CD8-positive, alpha-beta memory T cell (primary cell): ENCODE measurements at regions of chr20 and their contacts with region 1.

Region 1: DNA sequence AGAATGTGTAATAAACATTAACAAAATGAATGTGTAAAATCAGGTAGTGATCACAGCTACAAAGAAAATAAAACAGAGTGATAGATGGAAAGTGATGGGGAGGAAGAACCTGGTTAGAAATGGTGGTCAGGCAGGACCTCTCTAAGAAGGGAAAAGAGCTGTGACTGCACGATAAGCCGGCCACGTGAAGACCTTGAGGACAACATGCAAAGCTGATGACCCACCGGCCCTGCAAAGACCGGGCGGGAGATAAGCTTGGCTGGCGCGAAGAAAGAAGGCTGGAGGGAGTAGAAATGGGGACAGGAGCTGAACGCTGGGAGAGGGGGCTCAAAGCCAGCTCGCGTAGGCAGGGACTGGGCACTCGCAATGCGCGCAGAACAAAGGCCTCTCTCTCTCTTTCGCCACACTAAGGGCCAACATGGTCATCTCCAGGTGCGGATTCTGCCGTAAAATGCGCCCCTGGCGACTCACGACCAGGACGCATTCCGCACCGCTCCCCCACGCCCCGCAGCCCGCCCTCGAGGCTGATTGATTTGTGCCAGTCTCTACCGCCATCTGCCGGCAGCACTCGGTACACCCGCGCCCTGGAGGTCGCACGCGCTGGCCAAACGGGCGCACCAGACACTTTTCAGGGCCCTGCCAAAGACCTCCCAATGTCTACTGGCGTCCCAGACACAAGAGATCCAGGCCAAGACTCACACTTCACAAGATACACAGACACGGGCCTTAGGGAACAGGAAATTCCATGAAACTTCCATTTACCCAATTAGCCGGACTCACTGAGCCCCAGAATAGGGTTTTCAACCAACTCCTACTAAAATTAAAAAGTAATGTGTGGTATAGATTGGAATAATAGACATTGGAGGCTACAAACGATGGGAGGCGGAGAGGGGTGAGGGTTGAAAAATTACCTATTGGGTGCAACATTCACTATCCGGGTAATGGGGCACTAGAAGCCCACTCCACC is 9.4 kb downstream of the DEFB132 start:
- DNase-seq: peak; percentile 79 to 89 (median 84)
- H3K4me3 ChIP-seq: peak overlapping the region; percentile 75
- H3K4me3 Mint-ChIP-seq: peak overlapping the region; percentile 67 to 88 (median 82)
- H3K27ac ChIP-seq: no peak overlapping the region
- H3K27ac Mint-ChIP-seq: peak overlapping the region in 5 of 8 donors; percentile 19 to 57 (median 39)
- H3K4me1 ChIP-seq: peaks cover 6% of the 10 kb centered on the region
- H3K4me1 Mint-ChIP-seq: peaks cover 8 to 11% (median 10%) of the 10 kb centered on the region in 3 donors
- H3K27me3 ChIP-seq: no peaks in the 10 kb centered on the region
- H3K27me3 Mint-ChIP-seq: peaks cover 0 to 11% of the 10 kb centered on the region in 2 donors

Region 2: GRCh38 chr20:208942-209566 is 57.8 kb before region 1 on chr20:
- CTCF ChIA-PET with region 1: interaction called, 13 read pairs
- POLR2A ChIA-PET with region 1: no interaction called
- DNase-seq: peak in 2 of 5 donors; percentile 23 to 43
- H3K4me3 ChIP-seq: no peak overlapping the region
- H3K4me3 Mint-ChIP-seq: no peak overlapping the region
- H3K27ac ChIP-seq: no peak overlapping the region
- H3K27ac Mint-ChIP-seq: no peak overlapping the region
- H3K4me1 ChIP-seq: no peaks in the 10 kb centered on the region
- H3K4me1 Mint-ChIP-seq: no peaks in the 10 kb centered on the region
- H3K27me3 ChIP-seq: peaks cover 4% of the 10 kb centered on the region
- H3K27me3 Mint-ChIP-seq: peaks cover 0 to 14% of the 10 kb centered on the region in 2 donors

Region 3: DNA sequence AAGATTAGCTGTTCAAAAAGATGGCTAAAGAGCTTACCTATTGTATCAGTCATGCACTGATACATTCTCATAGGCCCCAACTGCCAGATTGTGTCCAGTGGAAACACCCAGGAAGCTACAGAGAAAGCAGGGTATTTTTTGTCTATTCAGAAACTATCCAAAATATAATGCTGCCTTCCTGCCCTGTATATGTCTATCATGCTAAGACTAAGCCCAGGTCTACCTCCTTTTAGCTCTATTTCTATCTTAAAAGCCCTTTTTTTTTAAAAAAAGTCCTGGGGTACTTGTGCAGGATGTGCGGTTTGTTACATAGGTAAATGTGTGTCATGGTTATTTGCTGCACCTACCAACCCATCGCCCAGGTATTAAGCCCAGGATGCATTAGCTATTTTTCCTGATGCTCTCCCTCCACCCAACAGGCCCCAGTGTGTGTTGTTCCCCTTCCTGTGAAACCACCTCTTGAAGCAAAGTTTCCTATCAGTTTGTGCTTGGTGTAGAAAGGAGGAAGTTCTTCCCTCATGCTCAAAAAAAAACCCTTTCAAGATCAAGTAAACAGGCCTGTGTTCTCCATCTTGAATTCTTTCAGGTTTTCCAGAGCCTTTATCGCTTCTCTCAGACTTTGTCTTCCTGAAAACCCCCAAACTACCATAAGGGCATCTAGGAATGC is 39.3 kb before region 1 on chr20:
- CTCF ChIA-PET with region 1: no interaction called
- POLR2A ChIA-PET with region 1: no interaction called
- DNase-seq: peak in 1 of 5 donors; percentile 16
- H3K4me3 ChIP-seq: no peak overlapping the region
- H3K4me3 Mint-ChIP-seq: no peak overlapping the region
- H3K27ac ChIP-seq: no peak overlapping the region
- H3K27ac Mint-ChIP-seq: no peak overlapping the region
- H3K4me1 ChIP-seq: peaks cover 21% of the 10 kb centered on the region
- H3K4me1 Mint-ChIP-seq: peaks cover 0 to 4% (median 0%) of the 10 kb centered on the region in 3 donors
- H3K27me3 ChIP-seq: no peaks in the 10 kb centered on the region
- H3K27me3 Mint-ChIP-seq: peaks cover 0 to 25% of the 10 kb centered on the region in 2 donors

Region 4: GRCh38 chr20:297098-297924 is 30.4 kb after region 1 on chr20 and contains the start of gene ZCCHC3:
- CTCF ChIA-PET with region 1: interaction called, 17 read pairs
- POLR2A ChIA-PET with region 1: interaction called, 7 read pairs
- DNase-seq: peak; percentile 73 to 89 (median 81)
- H3K4me3 ChIP-seq: peak within 1 kb of the TSS; percentile 95
- H3K4me3 Mint-ChIP-seq: peak within 1 kb of the TSS; percentile 96 to 100 (median 99)
- H3K27ac ChIP-seq: peak within 1 kb of the TSS; percentile 84
- H3K27ac Mint-ChIP-seq: peak within 1 kb of the TSS; percentile 98 to 100 (median 99)
- H3K4me1 ChIP-seq: peaks cover 26% of the 10 kb centered on the region
- H3K4me1 Mint-ChIP-seq: peaks cover 39 to 45% (median 45%) of the 10 kb centered on the region in 3 donors
- H3K27me3 ChIP-seq: no peaks in the 10 kb centered on the region
- H3K27me3 Mint-ChIP-seq: peaks cover 0 to 2% of the 10 kb centered on the region in 2 donors
- total RNA-seq, gene ZCCHC3: 25.3 to 25.4 TPM

Region 5: DNA sequence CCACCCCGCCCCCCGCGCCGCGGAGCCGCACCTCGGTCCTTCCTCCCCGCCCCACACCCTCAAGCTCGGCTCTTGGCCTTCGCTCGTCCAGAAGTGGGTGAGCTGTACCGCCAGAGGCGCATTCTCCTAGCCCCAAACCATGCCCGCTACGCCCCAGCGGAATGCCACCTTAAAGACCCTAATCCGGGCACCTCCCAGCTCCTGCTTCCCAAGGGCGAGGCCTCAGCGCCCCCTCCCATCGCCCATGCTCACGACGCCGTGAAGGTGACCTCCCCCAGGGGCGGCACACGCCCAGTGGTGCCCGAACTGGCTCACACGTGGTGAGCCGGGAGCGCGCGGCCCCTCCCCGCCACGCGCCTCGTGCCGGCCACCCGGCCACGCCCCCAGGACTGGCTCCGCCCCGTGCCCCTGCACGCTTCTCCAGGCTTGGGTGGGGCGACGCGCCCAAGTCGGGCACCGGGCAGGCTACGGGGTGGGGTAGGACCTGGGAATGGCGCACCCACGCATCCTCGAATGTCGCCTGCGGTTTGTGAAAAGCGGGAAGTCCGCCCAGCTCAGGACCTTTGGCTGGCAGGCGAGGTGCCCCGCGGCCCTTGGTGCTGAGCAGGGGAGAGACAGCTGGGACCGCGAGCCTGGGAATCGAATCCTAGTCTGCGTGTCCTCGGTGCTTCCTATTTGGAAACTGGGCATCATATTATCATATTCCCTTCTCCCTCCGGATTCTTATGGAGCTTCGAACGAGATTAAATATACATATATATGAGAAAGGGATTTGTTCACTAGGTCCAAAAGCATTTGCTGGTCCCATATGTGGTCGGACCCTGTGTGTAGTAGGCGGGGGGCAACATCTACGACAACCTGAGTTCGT is 57.5 kb after region 1 on chr20:
- CTCF ChIA-PET with region 1: interaction called, 60 read pairs
- POLR2A ChIA-PET with region 1: no interaction called
- DNase-seq: peak; percentile 83 to 92 (median 87)
- H3K4me3 ChIP-seq: peak overlapping the region; percentile 62
- H3K4me3 Mint-ChIP-seq: peak overlapping the region; percentile 91 to 100 (median 92)
- H3K27ac ChIP-seq: peak overlapping the region; percentile 28
- H3K27ac Mint-ChIP-seq: peak overlapping the region; percentile 72 to 96 (median 92)
- H3K4me1 ChIP-seq: peaks cover 22% of the 10 kb centered on the region
- H3K4me1 Mint-ChIP-seq: peaks cover 0 to 30% (median 18%) of the 10 kb centered on the region in 3 donors
- H3K27me3 ChIP-seq: no peaks in the 10 kb centered on the region
- H3K27me3 Mint-ChIP-seq: peaks cover 0 to 5% of the 10 kb centered on the region in 2 donors

Region 6: DNA sequence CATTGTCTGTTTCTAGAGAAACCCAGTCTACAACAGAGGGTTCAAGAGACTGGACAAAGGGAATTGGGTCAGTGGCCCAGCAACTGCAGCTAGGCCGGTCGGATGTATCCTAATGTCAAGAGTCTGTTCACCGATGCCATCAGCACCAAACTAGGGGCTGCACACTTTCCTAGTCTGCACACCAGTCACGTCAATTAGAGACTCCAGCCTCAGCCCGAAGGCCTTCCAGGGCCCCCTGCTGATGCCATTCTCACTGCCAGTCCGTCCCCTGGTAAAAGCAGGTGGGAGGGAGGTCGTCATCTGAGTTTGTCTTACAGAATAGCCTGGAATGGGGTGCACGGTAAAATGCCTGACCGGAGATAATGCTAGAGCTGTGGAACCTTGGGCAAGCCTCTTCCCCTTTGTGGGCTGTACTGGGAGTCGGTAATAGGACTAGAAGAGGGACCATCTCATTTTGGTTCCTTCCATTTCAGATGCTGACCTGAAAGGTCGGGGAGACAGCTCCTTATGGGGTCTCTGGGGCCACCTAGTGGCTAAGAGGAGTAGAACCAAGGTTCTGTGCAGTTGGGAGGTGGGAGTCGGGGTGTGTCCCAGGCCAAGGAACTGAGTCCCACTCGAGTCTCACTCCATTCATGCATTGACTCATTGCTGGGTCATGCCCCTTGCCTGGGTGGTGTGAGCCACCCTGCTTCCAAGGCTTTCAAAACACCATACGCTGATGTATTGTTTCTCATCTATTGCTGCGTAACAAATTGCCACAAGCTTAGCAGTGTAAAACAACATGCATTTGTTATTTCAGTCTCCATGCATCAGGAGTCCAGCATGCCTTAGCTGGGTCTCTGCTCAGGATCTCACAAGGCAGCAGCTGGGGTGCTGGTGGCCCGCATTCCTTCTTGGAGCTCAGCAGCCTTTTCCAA is 63.6 kb after region 1 on chr20:
- CTCF ChIA-PET with region 1: interaction called, 60 read pairs
- POLR2A ChIA-PET with region 1: no interaction called
- DNase-seq: peak; percentile 35 to 78 (median 58)
- H3K4me3 ChIP-seq: no peak overlapping the region
- H3K4me3 Mint-ChIP-seq: peak overlapping the region in 1 of 7 donors; percentile 60
- H3K27ac ChIP-seq: no peak overlapping the region
- H3K27ac Mint-ChIP-seq: peak overlapping the region in 3 of 8 donors; percentile 61 to 77 (median 72)
- H3K4me1 ChIP-seq: peaks cover 20% of the 10 kb centered on the region
- H3K4me1 Mint-ChIP-seq: peaks cover 6 to 26% (median 10%) of the 10 kb centered on the region in 3 donors
- H3K27me3 ChIP-seq: no peaks in the 10 kb centered on the region
- H3K27me3 Mint-ChIP-seq: peaks cover 0 to 1% of the 10 kb centered on the region in 2 donors